ENCODE measurements at regions of chr5 and their contacts with region 1.

Region 1: DNA sequence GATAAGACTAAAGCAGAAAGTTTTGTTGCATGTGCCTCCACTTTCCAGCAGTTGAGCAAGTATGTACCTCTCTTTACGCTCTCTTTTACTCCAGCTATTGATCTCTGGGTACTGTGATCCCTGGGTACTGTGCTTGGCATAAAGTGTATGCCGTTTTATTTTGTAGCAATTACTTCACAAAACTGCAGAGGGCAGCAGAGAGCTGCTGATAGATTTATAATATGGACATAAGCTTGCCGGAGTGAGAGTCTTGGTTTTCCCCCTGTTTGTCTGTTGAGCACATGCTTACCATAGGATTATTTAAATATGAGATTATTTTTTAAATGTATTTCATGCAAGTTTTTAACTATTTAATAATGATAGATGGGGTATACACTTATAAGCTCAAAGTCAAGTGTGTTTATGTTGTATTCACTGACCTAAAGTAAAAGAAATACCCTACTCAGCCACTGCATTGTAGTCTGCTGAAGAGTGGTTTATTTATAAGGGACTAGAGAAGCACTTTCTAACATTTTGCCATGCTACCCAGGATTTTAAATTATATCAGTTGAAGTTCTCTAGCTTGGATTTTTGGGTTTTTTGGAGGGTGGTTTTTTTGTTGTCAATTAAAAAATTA is 13.0 kb downstream of the TTC1 start:
- DNase-seq: no peak

Region 2: DNA sequence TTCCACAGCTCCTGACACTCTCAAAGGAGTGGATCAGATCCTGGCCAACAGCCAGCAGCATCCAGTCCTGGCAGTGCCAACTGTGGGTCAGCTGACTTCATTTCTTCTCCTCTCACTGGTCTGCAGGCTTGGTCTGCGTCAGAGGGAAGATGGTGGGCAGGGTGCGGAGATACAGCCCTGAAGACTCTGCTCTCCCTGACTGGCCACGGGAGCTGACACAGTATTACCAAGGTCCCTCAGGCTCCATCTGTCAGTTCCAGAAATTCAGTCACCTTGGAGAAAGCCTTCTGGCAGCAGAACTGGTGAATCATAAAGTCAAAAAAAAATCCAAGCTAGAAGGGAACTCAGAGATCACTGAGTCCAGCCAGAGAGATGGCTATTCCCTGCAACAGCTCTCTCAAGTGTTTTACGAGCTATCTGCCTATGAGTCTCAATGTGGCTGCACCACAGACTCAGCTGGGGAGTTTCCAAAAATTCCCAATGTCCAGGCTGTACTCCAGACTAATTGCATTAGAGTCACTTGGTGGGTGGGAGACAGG is 320.5 kb after region 1 on chr5:
- intact Hi-C with region 1: loop called (anchors 2 kb)
- DNase-seq: peak; percentile 20

Region 3: GRCh38 chr5:160399402-160400353 is 377.7 kb after region 1 on chr5 and contains the start of gene FAM200C:
- intact Hi-C with region 1: loop called (anchors 5 kb)
- DNase-seq: peak; percentile 96
- total RNA-seq, gene FAM200C: 3.3 TPM

Measured in cardiac septum (tissue), 1 donor.